Heart right ventricle (tissue), 16 donors: ENCODE measurements at regions of chr1 and their contacts with region 1.

Region 1: GRCh38 chr1:202716654-202717053 is 6.4 kb upstream of the SYT2 start:
- DNase-seq: no peak
- ATAC-seq: no peak
- H3K4me3 ChIP-seq: no peak overlapping the region
- H3K27ac ChIP-seq: no peak overlapping the region
- H3K4me1 ChIP-seq: peaks cover 0 to 9% (median 0%) of the 10 kb centered on the region in 9 donors
- H3K27me3 ChIP-seq: peaks cover 0 to 79% (median 3%) of the 10 kb centered on the region in 7 donors
- CTCF ChIP-seq: no peak

Region 2: GRCh38 chr1:202184750-202185460 is 531.7 kb before region 1 on chr1:
- intact Hi-C with region 1: loop called (anchors 1 to 5 kb)
- DNase-seq: peak; percentile 65 to 80
- ATAC-seq: peak; percentile 37 to 78 (median 72)
- H3K4me3 ChIP-seq: no peak overlapping the region
- H3K27ac ChIP-seq: no peak overlapping the region
- H3K4me1 ChIP-seq: peaks cover 0 to 6% (median 0%) of the 10 kb centered on the region in 9 donors
- H3K27me3 ChIP-seq: peaks cover 0 to 27% (median 6%) of the 10 kb centered on the region in 7 donors
- CTCF ChIP-seq: peak; percentile 57 to 84 (median 80)

Region 3: GRCh38 chr1:202192770-202193613 is 523.7 kb before region 1 on chr1:
- intact Hi-C with region 1: loop called in 7 of 10 experiments (anchors 2 to 5 kb)
- DNase-seq: peak; percentile 40 to 62
- ATAC-seq: peak; percentile 64 to 79 (median 73)
- H3K4me3 ChIP-seq: peak overlapping the region in 7 of 10 donors; percentile 16 to 40 (median 26)
- H3K27ac ChIP-seq: no peak overlapping the region
- H3K4me1 ChIP-seq: peaks cover 0 to 11% (median 6%) of the 10 kb centered on the region in 9 donors
- H3K27me3 ChIP-seq: peaks cover 0 to 34% (median 24%) of the 10 kb centered on the region in 7 donors
- CTCF ChIP-seq: peak; percentile 66 to 90 (median 85)